Posterior vena cava (tissue), 2 donors: ENCODE measurements at regions of chr12 and their contacts with region 1.

Region 1: GRCh38 chr12:26097046-26097878 is 27.6 kb downstream of the BHLHE41 start:
- DNase-seq: peak; percentile 88

Region 2: DNA sequence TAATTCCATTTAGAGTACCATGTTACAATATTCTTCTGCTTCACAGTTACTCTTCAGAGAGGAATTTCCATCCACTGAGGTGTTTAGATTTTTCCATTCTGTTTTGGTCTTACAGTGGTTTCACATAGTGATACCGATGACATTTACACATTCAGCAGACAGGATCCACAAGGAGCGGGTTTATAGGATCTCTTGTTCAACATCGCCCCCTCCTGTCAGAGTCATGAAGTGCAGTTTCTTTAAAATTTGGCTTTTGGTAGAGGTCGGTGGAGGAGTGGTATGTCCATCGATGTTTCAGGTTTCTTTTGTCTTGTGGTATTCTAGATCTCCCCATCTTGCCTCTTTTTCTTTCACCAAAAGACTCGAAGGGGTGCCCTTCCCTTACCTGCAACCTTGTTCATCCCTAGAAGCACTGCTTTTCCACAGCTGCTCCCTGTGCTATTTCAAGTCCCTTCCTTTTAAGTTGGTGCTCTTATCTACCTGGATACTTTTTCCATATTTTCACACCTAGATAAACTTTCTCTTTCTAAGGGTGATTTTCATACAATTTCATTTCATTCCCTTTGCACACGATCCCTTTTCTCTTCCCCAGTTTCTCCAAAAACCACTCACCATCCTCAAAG is 554.4 kb after region 1 on chr12:
- intact Hi-C with region 1: loop called in 1 of 2 experiments (anchors 10 kb)
- DNase-seq: no peak